Right ventricle myocardium inferior (tissue), 1 donor: ENCODE measurements at regions of chr12 and their contacts with region 1.

Region 1: GRCh38 chr12:11648831-11649702 is at the start of gene ETV6:
- DNase-seq: peak; percentile 83
- ATAC-seq: peak; percentile 75
- total RNA-seq, gene ETV6: 15.2 TPM

Region 2: GRCh38 chr12:11581179-11581755 is 67.8 kb before region 1 on chr12:
- intact Hi-C with region 1: loop called (anchors 5 kb)
- DNase-seq: no peak
- ATAC-seq: peak; percentile 23

Region 3: GRCh38 chr12:11672256-11673191 is 23.5 kb after region 1 on chr12:
- intact Hi-C with region 1: loop called (anchors 2 kb)
- DNase-seq: no peak
- ATAC-seq: peak; percentile 76

Region 4: GRCh38 chr12:11711651-11712327 is 62.7 kb after region 1 on chr12:
- intact Hi-C with region 1: loop called (anchors 5 kb)
- DNase-seq: no peak
- ATAC-seq: no peak

Region 5: DNA sequence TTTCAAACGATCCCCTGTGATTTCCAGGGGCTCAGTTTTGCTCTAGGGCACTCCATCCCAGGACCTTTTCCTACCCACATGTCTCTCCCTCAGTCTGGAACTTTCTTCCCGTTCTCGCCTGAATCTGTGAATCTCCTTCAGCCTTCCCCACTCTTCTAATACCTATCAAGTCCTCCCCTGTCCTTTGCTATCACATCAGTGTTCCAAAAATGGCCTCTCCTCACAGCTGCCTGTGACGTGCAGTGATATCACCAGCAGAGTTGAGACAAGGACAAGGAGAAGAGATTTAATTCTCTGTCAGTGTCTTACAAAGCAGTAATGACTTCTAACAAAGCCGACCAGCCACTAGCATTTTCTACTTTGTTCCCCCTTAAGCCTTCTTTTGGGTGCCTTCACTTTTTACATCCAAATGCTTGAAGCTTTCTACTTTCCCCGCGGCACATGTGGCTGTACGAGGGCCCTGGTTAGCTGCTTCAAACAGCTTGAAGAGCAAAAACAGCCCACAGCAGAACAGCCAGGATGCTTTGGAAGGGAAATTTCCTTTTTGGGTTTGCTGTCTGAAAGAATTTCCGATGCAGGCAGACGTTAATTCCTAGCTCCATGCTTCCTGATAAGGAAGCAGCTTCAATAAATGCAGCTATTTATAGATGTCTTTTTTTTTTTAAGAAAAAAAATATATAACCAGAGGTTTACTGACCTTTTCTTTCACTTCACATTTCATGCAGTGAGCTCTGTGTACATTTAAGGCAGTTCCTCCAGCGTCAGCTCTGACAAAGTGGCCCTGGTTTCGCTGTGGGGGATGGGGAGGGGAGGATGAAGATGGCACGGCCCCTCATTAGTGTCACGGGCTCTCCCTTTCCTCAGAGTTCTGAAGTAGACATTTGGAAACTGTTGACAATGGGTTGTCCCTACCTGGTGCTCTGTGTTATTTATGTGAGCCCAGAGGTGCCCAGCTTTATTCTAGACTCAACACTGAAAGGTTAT is 109.7 kb after region 1 on chr12:
- intact Hi-C with region 1: loop called (anchors 2 kb)
- DNase-seq: no peak
- ATAC-seq: peak; percentile 71

Region 6: GRCh38 chr12:11862798-11863197 is 213.7 kb after region 1 on chr12:
- intact Hi-C with region 1: loop called (anchors 1 kb)
- DNase-seq: no peak
- ATAC-seq: peak; percentile 70

Region 7: DNA sequence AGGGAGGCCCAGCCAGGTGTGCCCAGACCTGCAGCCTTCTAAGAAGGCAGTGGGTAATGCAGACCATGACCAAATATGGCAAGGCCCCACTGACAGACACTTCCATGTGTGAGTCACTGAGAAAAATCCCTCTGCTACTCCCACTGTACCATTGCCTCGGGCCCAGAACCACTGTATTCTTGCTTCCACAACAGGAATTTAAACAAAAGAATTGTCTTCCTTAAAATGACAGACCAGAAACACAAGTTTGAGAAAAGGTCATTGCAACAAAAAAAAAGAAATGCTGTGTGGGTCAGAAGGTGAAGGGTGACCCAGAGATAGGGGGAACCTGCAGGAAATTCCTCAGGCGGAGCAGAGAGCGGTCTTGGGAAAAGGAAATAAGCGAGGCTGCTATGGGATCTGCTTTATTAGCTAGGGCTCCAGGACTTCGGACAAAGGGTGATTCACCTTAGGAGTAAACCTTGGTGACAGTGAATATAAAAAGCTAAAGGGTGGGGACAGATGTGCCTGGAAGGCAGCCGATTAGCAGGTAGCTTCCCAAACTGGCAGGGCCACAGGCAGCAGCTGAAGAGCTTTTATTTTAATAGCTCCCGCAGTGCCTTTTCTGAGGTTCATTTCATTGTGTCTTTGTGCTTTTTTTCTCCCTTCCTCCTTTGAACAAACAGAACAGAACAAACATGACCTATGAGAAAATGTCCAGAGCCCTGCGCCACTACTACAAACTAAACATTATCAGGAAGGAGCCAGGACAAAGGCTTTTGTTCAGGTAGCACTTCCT is 236.4 kb after region 1 on chr12:
- intact Hi-C with region 1: loop called (anchors 5 kb)
- DNase-seq: no peak
- ATAC-seq: no peak